ENCODE measurements at regions of chr2 and their contacts with region 1.

Region 1: GRCh38 chr2:55268907-55269644 is at the start of gene MTIF2:
- DNase-seq: peak; percentile 95
- H3K4me3 Mint-ChIP-seq: peak within 1 kb of the TSS; percentile 87
- H3K27ac Mint-ChIP-seq: peak within 1 kb of the TSS; percentile 91
- H3K4me1 Mint-ChIP-seq: peaks cover 5% of the 10 kb centered on the region
- H3K27me3 Mint-ChIP-seq: no peaks in the 10 kb centered on the region
- CTCF ChIP-seq: no peak
- total RNA-seq, gene MTIF2: 58.3 and 60.7 TPM in 2 replicates

Region 2: DNA sequence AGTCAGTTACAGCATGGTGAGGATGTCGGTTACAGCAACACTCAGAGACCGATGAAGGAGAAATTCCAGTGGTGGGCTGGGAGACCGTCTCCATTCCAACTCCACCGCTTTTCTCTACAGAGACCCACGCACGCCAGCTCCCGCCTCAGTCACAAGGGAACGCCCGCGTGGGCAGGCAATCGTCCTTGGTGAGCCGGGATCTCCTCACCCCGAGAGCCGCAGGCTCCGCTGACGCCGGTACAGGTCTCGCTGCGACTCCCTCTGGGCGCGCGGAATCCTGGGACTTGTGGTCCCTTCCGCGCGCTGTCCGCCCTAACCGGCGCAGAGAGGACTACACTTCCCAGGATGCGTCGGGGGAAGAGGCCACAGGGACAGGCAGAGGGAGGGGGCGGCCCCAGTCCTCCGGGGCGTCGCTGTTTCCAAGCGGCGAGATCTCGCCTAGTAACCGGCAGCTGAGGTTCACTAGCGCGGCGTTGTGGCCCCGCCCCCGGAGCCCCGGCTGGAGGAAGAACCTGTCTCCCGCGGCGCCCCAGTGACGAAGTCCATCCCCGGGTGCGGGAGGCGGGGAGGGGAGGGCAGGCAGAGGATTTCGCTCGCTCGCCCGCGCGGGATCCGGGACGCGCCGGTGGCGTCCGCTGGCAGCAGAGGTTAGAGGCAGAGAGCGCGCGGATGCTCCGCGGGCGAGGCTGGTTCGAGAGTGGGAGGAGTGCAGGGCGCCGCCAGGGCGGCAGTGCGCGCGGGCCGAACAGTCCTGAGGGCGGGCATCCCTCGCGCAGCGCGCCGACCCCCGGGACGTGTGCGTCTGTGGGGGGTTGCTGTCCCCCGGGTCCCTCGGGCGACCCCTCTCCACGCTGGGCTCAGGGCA is 545.7 kb before region 1 on chr2 and contains the start of gene EML6:
- CTCF ChIA-PET with region 1: no interaction called
- POLR2A ChIA-PET with region 1: no interaction called
- intact Hi-C with region 1: no loop called
- DNase-seq: peak; percentile 99
- H3K4me3 Mint-ChIP-seq: peak within 1 kb of the TSS; percentile 87
- H3K27ac Mint-ChIP-seq: peak within 1 kb of the TSS; percentile 77
- H3K4me1 Mint-ChIP-seq: peaks cover 23% of the 10 kb centered on the region
- H3K27me3 Mint-ChIP-seq: no peaks in the 10 kb centered on the region
- CTCF ChIP-seq: no peak
- total RNA-seq, gene EML6: 0.77 and 1.7 TPM in 2 replicates

Region 3: DNA sequence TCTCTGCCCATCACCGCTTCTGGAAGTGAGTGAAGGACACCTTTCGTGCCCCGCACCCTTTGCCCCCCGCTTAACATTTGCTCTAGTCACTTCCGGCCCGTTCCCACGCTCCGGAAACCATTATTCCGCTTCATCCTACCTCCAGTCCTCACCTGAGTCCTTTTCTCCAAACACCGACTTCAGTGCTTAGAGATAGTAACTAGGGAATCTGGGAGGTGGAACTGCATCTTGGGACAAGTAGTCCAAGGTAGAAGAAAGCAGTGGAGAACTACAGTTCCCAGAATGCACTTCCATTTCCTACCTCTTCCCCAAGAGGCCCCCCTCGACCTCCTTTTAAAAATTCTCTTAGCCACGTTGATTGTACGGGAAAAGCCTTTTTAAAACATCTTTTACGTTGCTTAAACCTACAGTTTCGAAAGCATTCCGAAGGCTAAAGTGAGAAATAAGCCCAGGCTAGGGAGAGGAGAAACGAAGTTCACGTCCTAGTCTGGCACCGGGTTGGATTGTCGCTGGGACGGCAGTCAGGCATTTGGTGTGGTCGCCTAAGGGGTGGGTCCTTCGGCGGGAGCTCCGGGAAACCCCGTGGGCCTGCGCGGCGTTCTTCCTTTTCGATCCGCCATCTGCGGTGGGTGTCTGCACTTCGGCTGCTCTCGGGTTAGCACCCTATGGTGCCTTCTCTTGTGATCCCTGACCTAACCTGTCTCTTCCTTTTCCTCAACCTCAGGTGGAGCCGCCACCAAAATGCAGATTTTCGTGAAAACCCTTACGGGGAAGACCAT is 36.8 kb before region 1 on chr2 and contains the starts of genes CLHC1 and RPS27A:
- CTCF ChIA-PET with region 1: no interaction called
- POLR2A ChIA-PET with region 1: interaction called, 11 read pairs
- intact Hi-C with region 1: no loop called
- DNase-seq: peak; percentile 97
- H3K4me3 Mint-ChIP-seq: peak within 1 kb of the TSS; percentile 87
- H3K27ac Mint-ChIP-seq: peak within 1 kb of the TSS; percentile 96
- H3K4me1 Mint-ChIP-seq: peaks cover 36% of the 10 kb centered on the region
- H3K27me3 Mint-ChIP-seq: no peaks in the 10 kb centered on the region
- CTCF ChIP-seq: no peak
- total RNA-seq, gene CLHC1: 32.8 and 35.4 TPM in 2 replicates
- total RNA-seq, gene RPS27A: 1,343 and 1,536 TPM in 2 replicates

Region 4: GRCh38 chr2:55296393-55296792 is 27.3 kb after region 1 on chr2:
- CTCF ChIA-PET with region 1: no interaction called
- POLR2A ChIA-PET with region 1: interaction called, 10 read pairs
- intact Hi-C with region 1: no loop called
- DNase-seq: no peak
- H3K4me3 Mint-ChIP-seq: no peak overlapping the region
- H3K27ac Mint-ChIP-seq: no peak overlapping the region
- H3K4me1 Mint-ChIP-seq: no peaks in the 10 kb centered on the region
- H3K27me3 Mint-ChIP-seq: no peaks in the 10 kb centered on the region
- CTCF ChIP-seq: no peak

Region 5: GRCh38 chr2:55431982-55432627 is 163.0 kb after region 1 on chr2:
- CTCF ChIA-PET with region 1: interaction called, 4 read pairs
- POLR2A ChIA-PET with region 1: interaction called, 7 read pairs
- intact Hi-C with region 1: loop called (anchors 2 kb)
- DNase-seq: peak; percentile 51
- H3K4me3 Mint-ChIP-seq: no peak overlapping the region
- H3K27ac Mint-ChIP-seq: no peak overlapping the region
- H3K4me1 Mint-ChIP-seq: no peaks in the 10 kb centered on the region
- H3K27me3 Mint-ChIP-seq: no peaks in the 10 kb centered on the region
- CTCF ChIP-seq: peak; percentile 52

Region 6: DNA sequence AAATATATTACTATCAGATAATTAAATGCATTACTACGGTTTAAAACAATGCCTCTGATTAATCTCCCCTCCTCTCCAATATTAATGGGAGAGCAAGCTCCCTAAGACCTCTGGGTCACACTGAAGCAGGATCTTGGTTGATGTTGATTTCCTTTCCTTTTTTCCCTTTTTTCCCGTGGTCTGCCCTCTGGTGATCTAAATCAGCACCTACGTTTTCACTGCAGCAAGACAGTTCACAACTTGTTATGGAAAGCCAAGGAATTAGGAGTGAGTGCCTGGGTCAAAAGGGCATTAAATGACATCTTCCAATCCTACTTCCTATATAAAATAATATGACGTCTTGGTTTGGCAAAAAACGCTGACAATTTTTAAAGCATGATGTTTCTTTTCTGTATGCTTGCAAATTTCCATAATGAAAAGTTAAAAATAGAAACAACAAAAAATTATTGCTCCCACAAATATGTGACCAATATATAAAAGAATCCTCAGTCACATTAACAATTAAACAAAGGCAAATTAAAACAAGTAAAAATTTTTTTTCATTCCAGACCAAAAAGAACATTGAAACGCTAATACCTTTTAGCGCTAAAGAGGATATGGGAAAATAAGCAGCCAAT is 242.5 kb after region 1 on chr2:
- CTCF ChIA-PET with region 1: no interaction called
- POLR2A ChIA-PET with region 1: no interaction called
- intact Hi-C with region 1: loop called (anchors 1 kb)
- DNase-seq: peak; percentile 61
- H3K4me3 Mint-ChIP-seq: no peak overlapping the region
- H3K27ac Mint-ChIP-seq: no peak overlapping the region
- H3K4me1 Mint-ChIP-seq: peaks cover 6% of the 10 kb centered on the region
- H3K27me3 Mint-ChIP-seq: no peaks in the 10 kb centered on the region
- CTCF ChIP-seq: peak; percentile 34

Region 7: DNA sequence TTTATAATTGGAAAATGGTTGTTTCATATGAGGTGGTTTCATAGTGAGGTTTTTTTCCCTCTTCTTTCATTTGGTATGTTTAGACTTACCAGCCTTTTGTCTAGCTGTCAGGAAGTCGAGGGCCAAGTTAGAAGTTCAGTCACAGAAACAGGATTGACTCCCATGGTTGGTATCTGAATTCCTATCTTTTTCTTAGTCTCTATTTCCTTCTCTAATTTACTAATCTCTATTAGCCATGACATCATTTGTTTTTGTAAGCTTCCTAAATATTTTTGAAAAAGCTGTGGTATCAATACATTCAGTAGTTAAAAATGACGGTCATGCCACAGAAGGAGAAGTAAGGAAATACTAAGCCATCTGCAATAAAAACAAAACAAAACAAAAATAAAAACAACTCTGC is 1121.6 kb after region 1 on chr2:
- CTCF ChIA-PET with region 1: no interaction called
- POLR2A ChIA-PET with region 1: no interaction called
- intact Hi-C with region 1: no loop called
- DNase-seq: no peak
- H3K4me3 Mint-ChIP-seq: no peak overlapping the region
- H3K27ac Mint-ChIP-seq: no peak overlapping the region
- H3K4me1 Mint-ChIP-seq: no peaks in the 10 kb centered on the region
- H3K27me3 Mint-ChIP-seq: no peaks in the 10 kb centered on the region
- CTCF ChIP-seq: no peak